Activated naive CD4-positive, alpha-beta T cell treated with anti-CD3 and anti-CD28 coated beads for 36 hours (primary cell): ENCODE measurements at regions of chr7 and their contacts with region 1.

Region 1: GRCh38 chr7:114799628-114800028 is 122.3 kb upstream of the MDFIC start:
- DNase-seq: peak; percentile 39
- H3K4me3 Mint-ChIP-seq: no peak overlapping the region
- H3K27ac Mint-ChIP-seq: peak overlapping the region; percentile 81
- H3K4me1 Mint-ChIP-seq: peaks cover 70% of the 10 kb centered on the region
- H3K27me3 Mint-ChIP-seq: peaks cover 13% of the 10 kb centered on the region

Region 2: DNA sequence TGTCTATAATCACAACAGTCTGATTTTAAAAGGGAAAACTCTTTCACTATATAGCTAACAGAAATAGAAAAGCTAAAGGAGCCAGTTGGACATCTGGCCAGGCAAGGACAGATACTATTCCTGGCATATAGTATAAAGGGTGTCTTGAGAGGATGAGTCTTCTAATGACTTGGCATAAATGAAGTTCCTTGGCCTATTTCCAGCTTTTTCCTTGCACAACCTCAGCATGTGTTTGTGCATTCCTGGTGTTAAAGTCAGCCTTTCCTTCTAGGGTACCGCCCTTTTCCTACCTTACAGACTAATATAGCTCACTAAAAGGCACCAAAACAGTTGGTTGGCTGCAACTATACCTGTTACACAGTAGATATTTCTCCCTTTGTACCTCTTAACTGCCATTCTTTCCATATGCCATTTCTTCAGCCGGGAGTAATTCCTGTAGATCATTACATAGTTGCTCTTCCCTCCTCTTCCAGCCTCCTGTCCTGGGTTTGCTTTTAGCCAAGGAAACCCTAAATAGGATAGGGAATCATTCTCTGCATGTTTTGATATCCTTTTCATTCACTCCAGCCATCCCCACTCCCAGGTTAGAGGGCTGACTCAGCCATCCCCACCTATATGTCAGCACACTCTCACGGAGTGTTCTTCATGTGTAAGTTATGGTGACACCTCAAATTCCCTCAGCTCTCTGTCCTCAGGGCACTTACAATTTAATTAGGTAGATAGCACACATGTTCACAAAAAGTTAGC is 20.2 kb after region 1 on chr7:
- CTCF ChIA-PET with region 1: interaction called, 3 read pairs
- intact Hi-C with region 1: loop called (anchors 1 kb)
- DNase-seq: no peak
- H3K4me3 Mint-ChIP-seq: no peak overlapping the region
- H3K27ac Mint-ChIP-seq: no peak overlapping the region
- H3K4me1 Mint-ChIP-seq: peaks cover 27% of the 10 kb centered on the region
- H3K27me3 Mint-ChIP-seq: peaks cover 7% of the 10 kb centered on the region

Region 3: DNA sequence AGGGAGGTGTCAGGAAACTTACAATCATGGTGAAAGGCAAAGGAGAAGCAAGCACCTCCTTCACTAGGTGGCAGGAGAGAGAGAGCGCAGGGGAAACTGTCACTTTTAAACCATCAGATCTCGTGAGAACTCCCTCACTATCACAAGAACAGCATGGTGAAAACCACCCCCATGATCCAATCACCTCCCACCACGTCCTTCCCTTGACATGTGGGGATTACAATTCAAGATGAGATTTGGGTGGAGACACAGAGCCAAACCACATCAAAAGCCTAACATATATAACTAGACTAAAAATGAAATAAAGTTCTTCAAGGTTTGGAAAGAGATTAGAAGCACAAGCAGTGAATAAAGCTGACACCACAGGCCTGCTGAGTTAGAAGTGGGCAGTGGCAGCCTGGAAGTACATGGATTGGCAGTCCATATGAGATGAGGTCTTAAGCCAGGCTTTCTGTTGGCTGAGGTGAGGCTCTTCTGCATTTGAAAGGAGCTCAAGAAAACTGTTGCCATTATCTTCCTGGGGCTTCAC is 25.9 kb after region 1 on chr7:
- CTCF ChIA-PET with region 1: interaction called, 4 read pairs
- intact Hi-C with region 1: loop called (anchors 1 kb)
- DNase-seq: peak; percentile 82
- H3K4me3 Mint-ChIP-seq: peak overlapping the region; percentile 32
- H3K27ac Mint-ChIP-seq: peak overlapping the region; percentile 90
- H3K4me1 Mint-ChIP-seq: peaks cover 33% of the 10 kb centered on the region
- H3K27me3 Mint-ChIP-seq: peaks cover 4% of the 10 kb centered on the region

Region 4: GRCh38 chr7:114889646-114890285 is 90.1 kb after region 1 on chr7:
- CTCF ChIA-PET with region 1: no interaction called
- intact Hi-C with region 1: loop called (anchors 1 kb)
- DNase-seq: peak; percentile 35
- H3K4me3 Mint-ChIP-seq: no peak overlapping the region
- H3K27ac Mint-ChIP-seq: peak overlapping the region; percentile 87
- H3K4me1 Mint-ChIP-seq: peaks cover 43% of the 10 kb centered on the region
- H3K27me3 Mint-ChIP-seq: no peaks in the 10 kb centered on the region

Region 5: DNA sequence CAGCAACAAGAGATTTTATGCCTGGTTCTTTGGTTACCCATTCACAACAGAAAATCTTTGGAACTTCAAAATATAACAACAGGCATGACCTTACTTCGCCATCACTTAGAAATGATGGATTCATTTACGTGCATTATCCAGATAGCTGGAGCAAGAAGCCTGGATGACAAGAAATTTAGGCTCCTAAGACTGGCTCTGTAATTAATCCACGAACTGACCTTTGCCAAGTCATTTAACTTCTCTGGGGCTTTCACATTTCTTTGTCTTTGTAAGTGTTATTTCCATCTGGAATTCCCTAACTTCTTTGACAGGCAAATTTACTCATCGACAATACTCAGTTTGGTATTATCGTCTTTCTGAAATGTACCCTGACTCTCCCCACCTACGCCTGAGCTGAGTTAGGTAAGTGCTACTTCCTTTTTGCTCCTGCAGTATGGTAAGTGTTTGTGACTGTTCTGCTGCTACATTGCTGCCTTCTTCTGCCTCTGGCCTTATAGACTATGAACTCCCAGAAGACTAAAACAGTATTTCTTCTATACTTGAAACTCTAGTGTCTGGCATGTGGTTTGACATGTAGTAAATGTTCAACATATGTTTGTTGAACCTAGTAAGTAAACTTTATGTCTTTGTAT is 116.7 kb after region 1 on chr7:
- CTCF ChIA-PET with region 1: no interaction called
- intact Hi-C with region 1: loop called (anchors 1 kb)
- DNase-seq: peak; percentile 81
- H3K4me3 Mint-ChIP-seq: peak overlapping the region; percentile 46
- H3K27ac Mint-ChIP-seq: peak overlapping the region; percentile 94
- H3K4me1 Mint-ChIP-seq: peaks cover 66% of the 10 kb centered on the region
- H3K27me3 Mint-ChIP-seq: no peaks in the 10 kb centered on the region

Region 6: DNA sequence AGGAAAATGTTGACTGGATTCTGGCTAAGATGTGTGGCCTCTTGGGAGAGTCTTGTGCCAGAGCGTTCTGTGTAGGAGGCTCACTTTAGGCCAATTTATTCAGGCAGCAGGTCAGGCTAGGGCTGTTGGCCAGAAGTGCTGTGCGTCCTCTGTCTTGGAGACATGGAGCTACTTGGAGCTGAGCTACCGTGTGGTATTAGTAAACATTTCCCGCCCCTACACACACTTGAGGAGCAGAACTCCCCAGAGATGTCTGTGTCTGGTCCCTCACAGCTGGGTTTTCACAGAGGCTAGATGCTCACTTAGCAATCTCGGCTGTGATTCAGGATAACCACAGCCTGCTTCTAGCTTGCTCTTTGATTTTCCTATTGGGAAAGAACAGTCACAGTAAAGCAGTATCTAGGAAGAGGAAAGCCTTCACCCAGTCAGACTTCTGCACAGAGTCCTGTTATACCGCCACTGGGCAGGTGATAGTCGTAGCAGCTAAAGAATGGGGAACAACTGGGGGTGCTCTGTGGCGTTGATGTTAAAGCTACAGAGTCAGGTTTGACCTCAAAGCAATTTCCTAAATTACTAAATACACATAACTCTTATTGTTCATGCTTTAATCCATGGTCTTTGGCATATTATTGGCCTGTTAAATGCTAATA is 209.0 kb after region 1 on chr7:
- CTCF ChIA-PET with region 1: no interaction called
- intact Hi-C with region 1: loop called (anchors 5 kb)
- DNase-seq: peak; percentile 18
- H3K4me3 Mint-ChIP-seq: peak overlapping the region; percentile 20
- H3K27ac Mint-ChIP-seq: peak overlapping the region; percentile 74
- H3K4me1 Mint-ChIP-seq: peaks cover 74% of the 10 kb centered on the region
- H3K27me3 Mint-ChIP-seq: no peaks in the 10 kb centered on the region